ENCODE measurements at regions of chr6 and their contacts with region 1.

Region 1: DNA sequence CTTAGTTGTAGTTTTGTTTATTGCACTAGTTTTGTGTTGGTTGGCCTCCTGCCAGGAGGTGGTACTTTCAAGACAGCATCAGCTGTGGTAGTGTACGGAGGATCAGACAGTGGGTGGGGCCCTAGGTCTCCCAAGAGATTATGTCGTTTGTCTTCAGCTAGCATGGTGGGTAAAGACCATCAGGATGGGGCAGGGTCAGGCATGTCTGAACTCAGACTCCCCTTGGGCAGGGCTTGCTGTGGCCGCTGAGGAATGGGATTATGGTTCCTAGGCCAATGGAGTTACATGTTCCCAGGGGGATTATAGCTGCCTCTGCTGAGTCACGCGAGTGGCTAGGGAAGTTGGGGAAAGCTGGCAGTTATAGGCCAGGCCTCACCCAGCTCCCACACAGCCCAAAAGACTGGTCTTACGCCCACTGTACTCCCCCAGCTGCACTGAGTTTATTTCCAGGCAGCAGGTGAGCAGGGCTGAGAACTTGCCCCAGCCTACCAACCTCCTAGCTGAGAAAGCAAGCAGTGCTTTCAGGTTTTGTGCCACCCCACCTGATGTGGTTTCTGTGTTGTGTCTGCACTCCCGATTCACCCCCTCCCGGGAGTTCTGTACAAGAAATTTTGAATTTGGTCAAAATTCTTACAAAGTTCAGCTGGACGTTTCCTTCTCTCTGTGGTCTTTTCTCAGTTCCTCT is 24.7 kb downstream of the ZSCAN31 start:
- DNase-seq: no peak
- ATAC-seq: no peak

Region 2: DNA sequence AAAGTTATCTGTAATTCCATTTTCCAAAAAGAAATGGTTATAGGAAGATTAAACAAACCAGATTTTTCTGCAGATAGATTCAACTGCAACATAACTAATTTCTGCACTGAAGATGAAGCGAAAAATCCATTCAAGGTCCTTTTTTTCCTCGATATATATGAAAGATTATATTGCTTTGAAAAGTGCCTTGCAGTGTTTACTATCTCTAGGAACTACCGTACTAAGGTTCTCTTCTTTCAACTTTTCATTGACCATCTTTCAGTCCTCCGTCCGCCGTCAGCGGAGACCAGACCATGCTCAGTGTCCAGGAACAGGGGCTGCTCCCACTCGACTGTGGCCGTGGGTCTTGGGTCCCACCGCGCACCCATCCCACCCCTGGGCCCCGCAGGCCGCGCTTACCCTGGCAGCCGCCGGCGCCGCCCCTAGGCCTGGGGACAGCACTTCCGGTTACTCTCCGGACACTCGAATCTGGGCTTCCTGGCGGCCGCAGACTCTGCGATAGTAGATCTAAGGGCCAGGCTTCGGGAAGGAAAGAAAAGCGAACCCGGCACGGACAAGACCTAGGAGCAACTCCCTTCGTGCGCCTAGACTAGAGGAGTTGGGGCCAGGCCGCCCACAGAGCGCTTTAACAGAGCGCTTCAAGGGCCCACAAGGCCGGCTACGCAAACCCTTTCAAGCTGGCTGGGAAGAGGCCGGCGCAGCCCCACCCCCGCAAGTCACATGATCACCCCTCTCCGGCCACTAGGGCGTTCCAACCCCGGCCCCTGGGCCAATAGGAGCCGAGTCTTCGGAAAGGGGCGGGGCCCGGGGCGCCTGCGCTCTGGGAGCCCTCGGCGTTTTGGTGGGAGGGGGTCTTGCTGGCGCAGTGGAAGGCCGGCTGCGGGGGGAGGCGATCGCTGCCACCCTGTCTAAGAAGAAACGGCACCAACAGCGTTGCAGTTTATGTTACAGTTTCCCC is 1652.0 kb before region 1 on chr6 and contains the start of gene ZNF322:
- intact Hi-C with region 1: no loop called
- DNase-seq: peak; percentile 97
- ATAC-seq: peak; percentile 100
- total RNA-seq, gene ZNF322: 35.0 TPM

Region 3: GRCh38 chr6:28523241-28523622 is 212.0 kb after region 1 on chr6:
- intact Hi-C with region 1: loop called (anchors 10 kb)
- DNase-seq: no peak
- ATAC-seq: no peak

Region 4: DNA sequence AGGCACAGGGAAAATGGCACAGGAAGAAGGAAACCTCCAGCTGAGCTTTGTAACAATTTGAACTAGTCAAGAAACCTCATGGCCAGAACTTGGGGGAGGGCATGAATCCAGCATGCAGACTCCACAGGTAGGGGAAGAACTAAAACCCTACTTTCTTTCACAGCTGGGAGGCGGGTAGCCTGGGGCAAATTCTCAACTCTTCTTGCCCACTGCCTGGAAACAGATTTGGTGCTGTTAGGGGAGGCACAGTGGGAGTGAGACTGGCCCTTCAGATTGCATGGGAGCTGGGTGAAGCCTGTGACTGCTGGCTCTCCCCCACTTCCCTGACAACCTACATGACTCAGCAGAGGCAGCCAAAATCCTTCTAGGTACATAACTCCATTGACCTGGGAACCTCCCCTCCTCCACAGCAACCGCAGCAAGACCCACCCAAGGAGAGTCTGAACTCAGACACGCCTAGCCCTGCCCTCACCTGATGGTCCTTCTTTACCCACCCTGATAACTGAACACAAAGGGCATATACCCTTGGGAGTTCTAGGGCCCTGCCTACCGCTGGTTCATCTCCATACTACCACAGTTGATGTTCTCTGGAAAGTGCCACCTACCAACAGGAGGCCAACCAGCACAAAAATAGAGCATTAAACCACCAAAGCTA is 649.7 kb after region 1 on chr6:
- intact Hi-C with region 1: no loop called
- DNase-seq: no peak
- ATAC-seq: no peak

Measured in sciatic nerve (tissue), 2 donors.